PC-9 (cell line): ENCODE measurements at regions of chr14 and their contacts with region 1.

Region 1: GRCh38 chr14:43795600-43796228 is 711.4 kb downstream of the FSCB start:
- DNase-seq: no peak
- H3K4me3 ChIP-seq: no peak overlapping the region
- H3K27ac ChIP-seq: no peak overlapping the region
- H3K4me1 ChIP-seq: peaks cover 8% of the 10 kb centered on the region; the same call in 1 of the 2 replicates
- H3K27me3 ChIP-seq: no peaks in the 10 kb centered on the region
- CTCF ChIP-seq: peak; percentile 61

Region 2: GRCh38 chr14:42224053-42224888 is 1571.4 kb before region 1 on chr14:
- CTCF ChIA-PET with region 1: no interaction called
- POLR2A ChIA-PET with region 1: no interaction called
- intact Hi-C with region 1: loop called (anchors 5 kb)
- DNase-seq: peak in 1 of 2 experiments; percentile 63
- H3K4me3 ChIP-seq: no peak overlapping the region
- H3K27ac ChIP-seq: no peak overlapping the region
- H3K4me1 ChIP-seq: no peaks in the 10 kb centered on the region
- H3K27me3 ChIP-seq: no peaks in the 10 kb centered on the region
- CTCF ChIP-seq: peak; percentile 88

Region 3: GRCh38 chr14:43503590-43503907 is 292.2 kb before region 1 on chr14:
- CTCF ChIA-PET with region 1: no interaction called
- POLR2A ChIA-PET with region 1: no interaction called
- intact Hi-C with region 1: loop called (anchors 10 kb)
- DNase-seq: no peak
- H3K4me3 ChIP-seq: no peak overlapping the region
- H3K27ac ChIP-seq: no peak overlapping the region
- H3K4me1 ChIP-seq: no peaks in the 10 kb centered on the region
- H3K27me3 ChIP-seq: no peaks in the 10 kb centered on the region
- CTCF ChIP-seq: peak; percentile 40; the same call in 1 of the 2 replicates

Region 4: GRCh38 chr14:43765474-43765873 is 30.2 kb before region 1 on chr14:
- CTCF ChIA-PET with region 1: no interaction called
- POLR2A ChIA-PET with region 1: no interaction called
- intact Hi-C with region 1: no loop called
- DNase-seq: no peak
- H3K4me3 ChIP-seq: no peak overlapping the region
- H3K27ac ChIP-seq: no peak overlapping the region
- H3K4me1 ChIP-seq: no peaks in the 10 kb centered on the region
- H3K27me3 ChIP-seq: no peaks in the 10 kb centered on the region
- CTCF ChIP-seq: no peak